ENCODE measurements at regions of chr3 and their contacts with region 1.

Region 1: DNA sequence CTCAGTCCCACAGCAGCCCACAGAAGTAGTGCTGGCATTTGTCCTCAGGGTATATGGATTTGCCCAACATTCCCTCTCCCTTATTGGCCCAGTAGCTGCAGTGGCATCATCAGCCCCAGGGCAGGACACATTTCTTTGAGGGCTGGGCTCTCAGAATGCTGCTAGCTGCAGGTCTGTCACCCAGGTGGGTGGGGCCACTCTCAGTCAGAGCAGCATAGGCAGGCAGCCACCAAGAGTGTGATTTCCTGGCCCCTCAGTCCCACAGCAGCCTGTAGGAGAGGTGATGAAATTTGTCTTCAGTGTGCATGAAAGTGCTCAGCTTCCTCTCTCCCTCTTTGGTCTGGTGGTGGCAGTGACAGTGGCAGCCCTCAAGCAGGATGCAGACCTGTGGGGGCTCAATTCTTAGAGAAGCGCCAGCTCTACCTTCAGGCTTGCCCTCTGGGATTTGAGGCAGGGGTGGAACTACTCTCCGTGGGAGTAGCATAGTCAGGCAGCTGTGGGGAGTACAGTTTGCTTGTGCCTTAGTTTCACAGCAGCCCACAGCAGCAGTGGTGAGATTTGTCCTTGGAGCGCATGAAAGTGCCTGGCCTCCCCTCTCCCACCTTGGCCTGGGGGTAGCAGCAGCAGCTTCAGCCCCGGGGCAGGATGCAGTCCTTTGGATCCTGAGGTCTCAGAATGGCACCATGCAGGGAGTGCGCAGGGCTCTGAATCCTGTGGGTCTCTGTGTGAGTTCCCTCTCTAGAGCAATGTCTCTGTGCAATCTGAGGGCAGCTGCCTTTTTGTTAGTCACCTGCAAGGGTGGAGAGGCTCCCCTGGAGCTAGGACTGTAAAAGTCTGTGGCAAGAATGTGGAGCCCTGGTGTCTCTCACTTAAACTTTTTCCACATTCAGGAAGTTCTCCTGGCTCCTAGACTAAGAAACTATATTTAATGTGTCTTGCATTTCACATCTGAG is 1229.1 kb downstream of the ROBO2 start:
- DNase-seq: peak; percentile 80
- H3K4me3 Mint-ChIP-seq: peak overlapping the region; percentile 19
- H3K27ac Mint-ChIP-seq: peak overlapping the region; percentile 99
- H3K4me1 Mint-ChIP-seq: peaks cover 41% of the 10 kb centered on the region
- H3K27me3 Mint-ChIP-seq: no peaks in the 10 kb centered on the region
- CTCF ChIP-seq: no peak

Region 2: GRCh38 chr3:76826861-76827260 is 1442.1 kb before region 1 on chr3:
- CTCF ChIA-PET with region 1: no interaction called
- intact Hi-C with region 1: no loop called
- DNase-seq: no peak
- H3K4me3 Mint-ChIP-seq: no peak overlapping the region
- H3K27ac Mint-ChIP-seq: no peak overlapping the region
- H3K4me1 Mint-ChIP-seq: no peaks in the 10 kb centered on the region
- H3K27me3 Mint-ChIP-seq: no peaks in the 10 kb centered on the region
- CTCF ChIP-seq: no peak

Region 3: DNA sequence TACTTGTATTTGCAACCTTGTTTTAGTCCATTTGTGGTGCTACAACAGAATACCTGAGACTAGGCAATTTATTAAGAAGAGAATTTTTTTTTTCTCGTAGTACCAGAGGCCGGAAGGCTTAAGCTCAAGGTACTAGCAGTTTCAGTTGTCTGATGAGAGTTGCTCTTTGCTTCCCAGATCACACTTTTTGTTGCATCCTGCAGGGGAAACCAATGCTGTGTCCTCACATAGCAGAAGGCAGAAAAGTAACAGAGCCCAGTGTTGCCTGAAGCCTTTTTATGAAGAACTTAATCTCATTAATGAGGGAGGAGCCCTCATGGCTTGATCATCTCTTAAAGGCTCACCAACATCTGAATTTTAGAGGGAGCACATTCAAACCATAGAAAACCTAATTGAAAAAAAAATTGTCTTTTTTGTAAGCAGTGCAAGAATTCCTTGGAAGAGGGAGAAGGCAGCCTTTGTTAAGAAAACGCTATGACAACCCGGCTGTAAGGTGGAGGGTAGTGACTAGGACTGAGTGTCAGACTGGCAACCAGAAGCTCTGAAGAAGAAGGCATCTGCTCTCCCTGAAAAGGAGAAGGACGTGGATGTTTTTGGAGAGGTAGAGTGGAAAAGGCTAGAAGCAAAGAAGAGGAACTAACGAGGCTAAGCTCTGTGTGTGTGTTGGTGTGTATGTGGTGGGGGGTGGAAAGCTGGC is 16.2 kb after region 1 on chr3:
- CTCF ChIA-PET with region 1: interaction called, 14 read pairs
- intact Hi-C with region 1: no loop called
- DNase-seq: no peak
- H3K4me3 Mint-ChIP-seq: no peak overlapping the region
- H3K27ac Mint-ChIP-seq: no peak overlapping the region
- H3K4me1 Mint-ChIP-seq: peaks cover 13% of the 10 kb centered on the region
- H3K27me3 Mint-ChIP-seq: no peaks in the 10 kb centered on the region
- CTCF ChIP-seq: no peak

Region 4: GRCh38 chr3:78506581-78507195 is 237.7 kb after region 1 on chr3:
- CTCF ChIA-PET with region 1: no interaction called
- intact Hi-C with region 1: loop called (anchors 10 kb)
- DNase-seq: peak; percentile 35
- H3K4me3 Mint-ChIP-seq: peak overlapping the region; percentile 24
- H3K27ac Mint-ChIP-seq: peak overlapping the region; percentile 16
- H3K4me1 Mint-ChIP-seq: peaks cover 24% of the 10 kb centered on the region
- H3K27me3 Mint-ChIP-seq: no peaks in the 10 kb centered on the region
- CTCF ChIP-seq: no peak

Region 5: GRCh38 chr3:79019137-79019923 is 750.3 kb after region 1 on chr3:
- CTCF ChIA-PET with region 1: no interaction called
- intact Hi-C with region 1: loop called (anchors 5 kb)
- DNase-seq: peak; percentile 80
- H3K4me3 Mint-ChIP-seq: no peak overlapping the region
- H3K27ac Mint-ChIP-seq: peak overlapping the region; percentile 93
- H3K4me1 Mint-ChIP-seq: peaks cover 8% of the 10 kb centered on the region
- H3K27me3 Mint-ChIP-seq: no peaks in the 10 kb centered on the region
- CTCF ChIP-seq: no peak